Activated T-helper 2 cell treated with anti-CD3 and anti-CD28 coated beads, Interferon-gamma antibody, Interleukin-2, Interleukin-4, amounts not matched to agents 10 μg/mL and 5 μg/mL and 100 μg/mL, durations not matched to agents 14 hours and 24 hours and 36 hours (primary cell): ENCODE measurements at regions of chr20 and their contacts with region 1.

Region 1: DNA sequence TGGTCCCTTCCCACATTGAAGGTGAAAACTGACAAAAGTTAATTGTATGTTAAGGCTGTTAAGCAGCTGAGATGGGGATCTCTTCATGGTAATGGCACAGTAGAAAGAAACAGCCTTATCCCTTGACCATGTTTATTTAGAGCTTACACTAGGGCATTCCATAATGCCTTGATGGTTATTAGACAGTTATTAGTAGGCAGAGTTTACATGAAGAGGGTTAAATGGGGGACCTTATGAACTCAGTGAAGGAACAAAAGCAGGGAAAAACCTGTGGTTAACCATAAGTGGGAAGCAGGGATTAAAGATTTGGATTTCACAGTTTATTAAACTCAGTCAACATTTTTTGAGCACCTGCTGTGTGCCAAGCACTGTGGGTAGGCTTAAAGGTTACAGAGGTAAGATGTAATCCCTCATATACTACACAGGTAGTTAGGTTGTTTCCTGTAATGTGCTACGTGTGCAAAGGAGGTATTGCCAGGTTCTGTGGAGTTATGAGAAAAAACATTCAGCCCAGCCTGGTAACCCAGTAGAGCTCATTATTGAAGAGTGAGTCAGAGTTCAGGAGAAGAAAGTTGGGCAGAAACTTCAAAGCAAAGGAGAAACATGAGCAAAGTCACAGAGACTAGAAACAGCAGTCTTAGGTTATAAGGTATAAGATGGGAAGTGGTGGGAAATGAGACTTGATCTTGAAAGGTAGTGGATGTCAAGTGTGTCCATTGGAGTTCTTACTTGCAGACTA is 32.3 kb upstream of the GNRH2 start:
- DNase-seq: no peak
- H3K4me3 Mint-ChIP-seq: peak overlapping the region; percentile 1
- H3K27ac Mint-ChIP-seq: peak overlapping the region; percentile 94
- H3K4me1 Mint-ChIP-seq: peaks cover 57% of the 10 kb centered on the region
- H3K27me3 Mint-ChIP-seq: no peaks in the 10 kb centered on the region

Region 2: DNA sequence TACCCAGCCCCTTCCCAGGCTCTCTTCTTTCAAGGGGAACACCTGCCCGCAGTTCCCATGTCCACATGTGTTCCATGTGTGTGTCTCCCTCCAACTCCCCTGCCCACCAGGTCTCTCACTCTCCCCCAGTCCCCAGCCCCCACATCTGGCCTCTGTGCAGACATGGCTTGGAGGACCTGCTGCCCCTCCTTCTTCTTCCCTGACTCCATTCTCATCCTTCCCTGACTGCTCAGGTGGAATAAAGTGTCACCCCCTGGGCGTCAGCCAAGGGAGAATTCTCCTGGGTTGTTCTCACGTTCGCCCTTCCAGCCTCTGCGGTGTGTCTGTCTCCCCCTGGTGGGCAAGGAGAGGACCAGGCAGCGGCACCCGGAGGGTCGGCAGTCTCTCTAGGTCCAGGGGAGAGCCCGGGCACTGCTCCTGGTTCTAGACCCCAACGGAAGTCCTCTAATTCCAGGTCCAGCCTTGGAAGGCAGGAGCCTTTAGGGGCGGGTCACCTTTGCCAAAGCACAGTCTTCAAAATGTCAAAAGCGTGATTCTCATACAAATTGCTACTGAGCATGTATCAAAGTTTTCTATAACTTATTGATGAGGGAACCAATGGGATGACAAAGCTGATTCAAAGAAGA is 268.1 kb before region 1 on chr20:
- intact Hi-C with region 1: loop called (anchors 5 kb)
- DNase-seq: peak; percentile 59
- H3K4me3 Mint-ChIP-seq: peak overlapping the region; percentile 68
- H3K27ac Mint-ChIP-seq: peak overlapping the region; percentile 70
- H3K4me1 Mint-ChIP-seq: peaks cover 27% of the 10 kb centered on the region
- H3K27me3 Mint-ChIP-seq: peaks cover 17% of the 10 kb centered on the region

Region 3: DNA sequence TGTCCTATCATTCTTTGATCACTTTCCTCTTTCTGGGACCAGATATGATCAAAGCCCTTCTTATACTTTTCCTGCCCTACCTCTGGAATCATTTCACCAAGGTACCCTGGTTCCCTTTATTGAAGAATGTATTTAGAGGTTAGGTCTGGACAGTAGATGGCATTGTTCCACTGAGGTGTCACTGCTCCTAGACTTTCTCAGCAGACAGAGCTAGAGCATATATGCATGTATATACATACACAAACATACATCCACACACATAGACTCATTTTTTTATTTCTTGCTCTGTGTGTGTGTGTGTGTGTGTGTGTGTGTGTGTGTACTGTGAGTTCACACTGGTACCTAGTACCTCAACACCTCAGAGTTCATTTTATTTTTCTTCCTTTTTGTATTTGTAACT is 97.0 kb before region 1 on chr20:
- intact Hi-C with region 1: loop called (anchors 1 kb)
- DNase-seq: no peak
- H3K4me3 Mint-ChIP-seq: no peak overlapping the region
- H3K27ac Mint-ChIP-seq: no peak overlapping the region
- H3K4me1 Mint-ChIP-seq: peaks cover 11% of the 10 kb centered on the region
- H3K27me3 Mint-ChIP-seq: no peaks in the 10 kb centered on the region

Region 4: DNA sequence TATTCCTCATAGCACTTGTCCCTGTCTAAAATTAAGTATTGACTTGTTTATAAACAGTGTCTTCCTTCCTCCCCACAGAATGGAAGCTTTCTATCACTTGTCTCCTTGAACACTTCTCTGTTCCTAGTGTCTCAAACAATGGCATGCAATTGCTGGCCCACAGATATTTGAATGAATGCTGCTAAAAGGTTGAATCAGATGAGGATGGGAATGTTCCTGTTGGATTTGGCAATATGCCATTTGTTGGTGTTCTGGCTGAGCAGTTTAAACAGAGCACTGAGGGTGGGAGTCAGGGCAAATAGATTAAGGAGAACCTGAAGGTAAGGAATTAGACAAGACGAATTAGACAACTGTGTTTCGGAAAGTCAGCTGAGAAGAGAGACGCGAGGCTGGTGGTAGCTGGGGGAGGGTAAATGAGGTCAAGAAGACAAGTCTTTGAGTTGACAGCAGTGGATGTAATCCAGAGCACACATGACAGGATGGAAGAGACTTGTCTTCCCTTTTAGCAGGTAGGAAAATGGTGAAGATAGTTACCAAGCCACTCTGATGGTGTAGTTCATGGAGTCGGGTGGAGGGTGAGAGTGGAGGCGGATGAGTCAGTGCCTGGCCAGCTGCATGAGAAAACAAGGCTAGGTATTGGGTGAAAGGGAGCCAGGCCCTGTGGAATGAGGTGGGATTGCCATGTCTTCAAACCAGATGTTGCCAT is 26.0 kb before region 1 on chr20:
- intact Hi-C with region 1: loop called (anchors 1 kb)
- DNase-seq: no peak
- H3K4me3 Mint-ChIP-seq: no peak overlapping the region
- H3K27ac Mint-ChIP-seq: no peak overlapping the region
- H3K4me1 Mint-ChIP-seq: peaks cover 40% of the 10 kb centered on the region
- H3K27me3 Mint-ChIP-seq: no peaks in the 10 kb centered on the region

Region 5: GRCh38 chr20:3045816-3046676 is 34.9 kb after region 1 on chr20 and contains the start of gene MRPS26:
- intact Hi-C with region 1: loop called (anchors 1 kb)
- DNase-seq: peak; percentile 81
- H3K4me3 Mint-ChIP-seq: peak within 1 kb of the TSS; percentile 86
- H3K27ac Mint-ChIP-seq: peak within 1 kb of the TSS; percentile 81
- H3K4me1 Mint-ChIP-seq: peaks cover 13% of the 10 kb centered on the region
- H3K27me3 Mint-ChIP-seq: no peaks in the 10 kb centered on the region
- total RNA-seq, gene MRPS26: 143 and 148 TPM in 2 replicates